Spleen (tissue), 13 donors: ENCODE measurements at regions of chr13 and their contacts with region 1.

Region 1: GRCh38 chr13:35164324-35164932 is 222.4 kb downstream of the NBEA start:
- DNase-seq: no peak
- H3K4me3 ChIP-seq: no peak overlapping the region
- H3K27ac ChIP-seq: no peak overlapping the region
- H3K4me1 ChIP-seq: peaks cover 0 to 14% (median 9%) of the 10 kb centered on the region in 6 donors
- H3K27me3 ChIP-seq: no peaks in the 10 kb centered on the region
- CTCF ChIP-seq: peak in 10 of 11 experiments; percentile 15 to 64 (median 50)
- POLR2A ChIP-seq: no peak

Region 2: DNA sequence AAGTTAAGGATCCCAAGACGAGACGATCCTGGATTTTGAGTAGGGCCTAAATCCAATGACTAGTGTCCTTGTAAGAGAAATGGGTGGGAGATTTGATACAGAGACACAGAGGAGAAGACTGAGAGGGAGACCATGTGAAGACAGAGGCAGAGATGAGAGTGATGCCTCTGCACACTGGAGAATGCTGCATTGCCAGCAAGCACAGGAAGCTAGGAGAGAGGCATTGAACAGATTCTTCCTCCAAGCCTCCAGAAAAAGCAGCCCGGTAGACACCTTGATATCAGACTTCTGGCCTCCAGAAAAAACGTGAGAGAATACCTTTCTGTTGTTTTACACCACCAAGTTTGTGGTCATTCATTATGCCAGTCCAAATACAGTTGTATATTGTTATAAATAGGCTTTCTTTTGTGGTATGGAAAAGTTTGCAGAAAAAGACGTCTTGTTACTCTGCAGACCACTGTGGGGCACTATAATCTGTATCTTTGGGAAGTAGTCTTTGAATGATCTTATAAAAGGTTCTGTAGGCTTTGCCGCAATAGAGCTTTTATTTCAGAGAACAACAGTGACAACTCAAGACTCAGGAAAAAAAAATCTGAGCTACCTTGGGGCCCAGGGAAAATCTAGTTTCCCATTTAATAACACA is 1364.4 kb before region 1 on chr13:
- intact Hi-C with region 1: loop called (anchors 10 kb)
- DNase-seq: no peak
- H3K4me3 ChIP-seq: peak overlapping the region in 2 of 8 donors; percentile 4 to 27
- H3K27ac ChIP-seq: no peak overlapping the region
- H3K4me1 ChIP-seq: peaks cover 0 to 10% (median 0%) of the 10 kb centered on the region in 6 donors
- H3K27me3 ChIP-seq: no peaks in the 10 kb centered on the region
- CTCF ChIP-seq: peak in 5 of 11 experiments; percentile 10 to 35 (median 27)
- POLR2A ChIP-seq: no peak

Region 3: GRCh38 chr13:34900288-34900739 is 264.1 kb before region 1 on chr13:
- intact Hi-C with region 1: no loop called
- DNase-seq: no peak
- H3K4me3 ChIP-seq: no peak overlapping the region
- H3K27ac ChIP-seq: no peak overlapping the region
- H3K4me1 ChIP-seq: no peaks in the 10 kb centered on the region
- H3K27me3 ChIP-seq: no peaks in the 10 kb centered on the region
- CTCF ChIP-seq: no peak
- POLR2A ChIP-seq: no peak